Activated CD4-positive, alpha-beta T cell treated with anti-CD3 and anti-CD28 coated beads for 36 hours (primary cell): ENCODE measurements at regions of chr3 and their contacts with region 1.

Region 1: DNA sequence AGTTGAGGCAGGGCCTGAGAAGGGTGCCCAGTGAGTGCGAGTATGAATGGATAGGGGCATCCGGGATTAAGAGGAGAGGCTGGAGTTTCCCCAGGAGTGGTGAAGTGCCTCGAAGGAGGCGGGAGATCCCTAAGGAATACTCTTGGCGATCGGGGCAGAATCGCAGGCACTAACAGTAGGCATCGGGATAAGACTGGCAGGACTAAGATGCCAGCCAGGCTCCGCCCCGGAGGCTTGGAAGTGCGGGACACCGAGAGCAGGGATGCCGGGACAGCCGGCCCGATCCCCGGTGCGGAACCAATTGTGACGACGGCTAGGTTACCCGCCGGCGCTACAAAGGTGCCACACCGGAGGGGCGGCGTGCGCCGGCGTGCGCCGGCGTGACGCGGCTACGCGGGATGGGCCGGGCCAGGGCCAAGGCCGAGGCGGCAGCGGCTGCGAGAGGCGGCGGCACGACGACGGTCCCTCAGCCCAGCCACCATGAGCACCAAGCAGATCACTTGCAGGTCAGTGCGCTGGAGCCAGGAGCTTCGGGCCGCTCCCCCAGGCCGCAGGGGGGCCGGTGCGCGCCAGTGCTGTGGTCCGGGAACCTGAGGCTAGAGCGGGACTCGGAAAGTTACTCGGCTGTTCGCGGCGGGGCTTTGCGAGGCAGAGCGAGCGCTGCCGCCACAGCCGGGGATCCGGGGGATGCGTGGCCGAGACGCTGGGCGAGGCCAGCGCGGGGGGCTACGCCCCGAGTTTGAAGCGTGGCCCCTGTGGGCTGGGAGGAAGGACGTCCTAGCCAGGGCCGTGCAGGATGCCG is at the start of gene MKRN2:
- DNase-seq: peak; percentile 91
- ATAC-seq: peak; percentile 86
- H3K4me3 Mint-ChIP-seq: peak within 1 kb of the TSS; percentile 87
- H3K27ac Mint-ChIP-seq: peak within 1 kb of the TSS; percentile 92
- H3K4me1 Mint-ChIP-seq: peaks cover 51% of the 10 kb centered on the region
- H3K27me3 Mint-ChIP-seq: peaks cover 22% of the 10 kb centered on the region
- total RNA-seq, gene MKRN2: 21.5 to 24.9 TPM

Region 2: GRCh38 chr3:11601446-11602238 is 955.2 kb before region 1 on chr3:
- CTCF ChIA-PET with region 1: no interaction called
- POLR2A ChIA-PET with region 1: no interaction called
- intact Hi-C with region 1: no loop called
- DNase-seq: peak; percentile 70
- ATAC-seq: peak; percentile 90
- H3K4me3 Mint-ChIP-seq: no peak overlapping the region
- H3K27ac Mint-ChIP-seq: peak overlapping the region; percentile 73
- H3K4me1 Mint-ChIP-seq: peaks cover 36% of the 10 kb centered on the region
- H3K27me3 Mint-ChIP-seq: no peaks in the 10 kb centered on the region

Region 3: DNA sequence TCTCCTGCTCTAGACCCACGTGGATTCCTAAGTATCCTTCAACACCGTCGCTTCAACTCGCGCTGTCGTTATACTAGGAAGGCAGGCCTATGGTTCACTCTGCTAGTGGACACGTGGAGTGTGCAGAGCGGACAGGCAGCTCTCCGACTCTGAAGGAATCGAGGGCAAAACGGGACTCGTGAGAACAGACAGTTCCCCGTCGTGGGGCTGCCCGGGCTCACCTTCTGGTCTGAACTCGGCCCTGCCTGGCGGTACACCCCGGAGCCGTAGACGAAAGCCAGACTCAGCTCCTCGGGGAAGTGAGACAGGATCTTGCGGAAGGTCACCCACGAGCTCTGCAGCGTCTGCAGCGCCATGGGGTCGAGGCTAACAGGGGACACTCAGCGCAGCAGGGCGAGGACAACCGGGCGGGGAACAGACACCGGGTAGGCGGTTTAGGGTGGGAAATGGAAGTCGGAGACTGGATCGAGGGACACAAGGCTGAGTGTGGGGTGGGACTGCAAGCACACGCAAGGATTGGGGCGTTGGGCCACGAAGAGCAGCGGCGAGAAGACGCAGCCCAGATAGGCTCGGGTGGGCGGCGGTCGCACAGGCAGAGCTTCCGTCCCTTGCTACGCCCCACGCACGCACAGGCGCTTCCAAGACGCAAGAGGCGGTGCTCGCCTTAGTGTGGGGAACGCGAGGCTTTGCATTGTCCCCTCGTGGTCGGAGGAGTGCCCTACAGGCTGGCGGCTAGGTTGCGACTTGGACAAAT is 710.4 kb before region 1 on chr3 and contains the start of gene TAMM41:
- CTCF ChIA-PET with region 1: no interaction called
- POLR2A ChIA-PET with region 1: no interaction called
- intact Hi-C with region 1: loop called in 1 of 2 experiments (anchors 5 kb)
- DNase-seq: peak; percentile 95
- ATAC-seq: peak; percentile 100
- H3K4me3 Mint-ChIP-seq: peak within 1 kb of the TSS; percentile 97
- H3K27ac Mint-ChIP-seq: peak within 1 kb of the TSS; percentile 91
- H3K4me1 Mint-ChIP-seq: peaks cover 31% of the 10 kb centered on the region
- H3K27me3 Mint-ChIP-seq: no peaks in the 10 kb centered on the region
- total RNA-seq, gene TAMM41: 26.3 to 30.2 TPM

Region 4: DNA sequence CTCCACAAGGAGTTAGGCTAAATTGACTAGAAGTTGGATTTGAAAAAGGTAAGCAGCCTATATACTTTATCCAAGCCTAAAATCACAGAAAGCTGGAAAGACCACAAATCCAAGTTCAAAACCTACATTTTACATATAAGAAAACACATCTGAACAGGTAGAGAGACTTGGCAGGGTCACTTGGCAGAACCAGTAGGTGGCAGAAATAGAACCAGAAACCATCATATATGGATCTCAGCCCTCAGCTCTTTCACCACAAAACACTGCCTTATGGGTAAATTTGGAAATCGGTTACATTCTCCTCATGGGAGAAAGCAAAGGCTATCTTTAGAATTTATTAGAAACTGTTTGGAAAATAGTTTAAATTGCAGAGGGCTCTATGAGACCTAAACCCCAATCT is 44.2 kb after region 1 on chr3:
- CTCF ChIA-PET with region 1: no interaction called
- POLR2A ChIA-PET with region 1: no interaction called
- intact Hi-C with region 1: loop called (anchors 2 to 5 kb)
- DNase-seq: no peak
- ATAC-seq: no peak
- H3K4me3 Mint-ChIP-seq: no peak overlapping the region
- H3K27ac Mint-ChIP-seq: no peak overlapping the region
- H3K4me1 Mint-ChIP-seq: peaks cover 3% of the 10 kb centered on the region
- H3K27me3 Mint-ChIP-seq: no peaks in the 10 kb centered on the region

Region 5: DNA sequence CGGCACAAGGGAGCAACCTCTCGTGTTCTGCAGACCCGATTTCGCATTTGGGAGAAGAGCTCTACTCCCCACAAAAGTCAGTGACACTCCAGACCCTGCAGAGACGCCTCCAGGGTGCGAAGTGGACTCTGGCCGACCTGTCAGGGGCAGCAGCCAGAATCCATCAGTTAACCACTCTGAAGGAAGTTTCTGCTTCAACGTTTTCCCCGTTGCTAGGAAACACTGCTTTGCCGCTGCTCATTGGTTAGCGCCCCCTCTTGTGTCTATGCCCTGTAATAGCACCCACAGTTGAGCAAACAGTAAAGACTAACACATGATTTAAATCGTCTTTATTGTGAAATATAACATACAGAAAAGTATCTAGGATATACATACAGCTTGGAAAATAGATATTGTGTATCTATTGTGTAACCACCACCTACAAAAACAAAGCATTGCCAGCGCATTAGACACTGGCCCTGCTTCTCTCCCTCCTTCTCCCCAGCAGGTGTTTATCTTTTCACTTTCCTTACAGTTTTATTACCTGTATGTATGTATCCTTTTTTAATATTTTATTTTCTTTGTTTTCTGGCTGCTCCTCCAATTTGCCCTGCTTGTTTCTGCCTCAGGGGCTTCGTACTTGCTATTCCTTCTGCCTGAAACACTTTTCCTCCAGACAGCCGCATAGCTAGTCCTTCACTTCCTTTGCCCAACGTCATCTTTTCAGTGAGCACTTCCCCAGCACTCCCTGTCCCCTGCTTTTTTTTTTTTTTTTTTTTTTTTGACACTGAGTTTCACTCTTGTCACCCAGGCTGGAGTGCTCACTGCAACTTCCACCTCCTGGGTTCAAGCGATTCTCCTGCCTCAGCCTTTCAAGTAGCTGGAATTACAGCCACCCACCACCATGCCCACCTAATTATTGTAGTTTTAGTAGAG is 163.4 kb after region 1 on chr3:
- CTCF ChIA-PET with region 1: interaction called, 6 read pairs
- POLR2A ChIA-PET with region 1: no interaction called
- intact Hi-C with region 1: loop called in 1 of 2 experiments (anchors 2 kb)
- DNase-seq: peak; percentile 80
- ATAC-seq: peak; percentile 74
- H3K4me3 Mint-ChIP-seq: peak overlapping the region; percentile 36
- H3K27ac Mint-ChIP-seq: no peak overlapping the region
- H3K4me1 Mint-ChIP-seq: peaks cover 9% of the 10 kb centered on the region
- H3K27me3 Mint-ChIP-seq: no peaks in the 10 kb centered on the region

Region 6: GRCh38 chr3:12822725-12823373 is 266.0 kb after region 1 on chr3:
- CTCF ChIA-PET with region 1: no interaction called
- POLR2A ChIA-PET with region 1: no interaction called
- intact Hi-C with region 1: no loop called
- DNase-seq: no peak
- ATAC-seq: no peak
- H3K4me3 Mint-ChIP-seq: no peak overlapping the region
- H3K27ac Mint-ChIP-seq: peak overlapping the region; percentile 13
- H3K4me1 Mint-ChIP-seq: no peaks in the 10 kb centered on the region
- H3K27me3 Mint-ChIP-seq: no peaks in the 10 kb centered on the region

Region 7: GRCh38 chr3:12891985-12892839 is 335.3 kb after region 1 on chr3:
- CTCF ChIA-PET with region 1: no interaction called
- POLR2A ChIA-PET with region 1: no interaction called
- intact Hi-C with region 1: loop called in 1 of 2 experiments (anchors 2 kb)
- DNase-seq: peak; percentile 64
- ATAC-seq: peak; percentile 58
- H3K4me3 Mint-ChIP-seq: no peak overlapping the region
- H3K27ac Mint-ChIP-seq: no peak overlapping the region
- H3K4me1 Mint-ChIP-seq: peaks cover 9% of the 10 kb centered on the region
- H3K27me3 Mint-ChIP-seq: peaks cover 12% of the 10 kb centered on the region

Region 8: DNA sequence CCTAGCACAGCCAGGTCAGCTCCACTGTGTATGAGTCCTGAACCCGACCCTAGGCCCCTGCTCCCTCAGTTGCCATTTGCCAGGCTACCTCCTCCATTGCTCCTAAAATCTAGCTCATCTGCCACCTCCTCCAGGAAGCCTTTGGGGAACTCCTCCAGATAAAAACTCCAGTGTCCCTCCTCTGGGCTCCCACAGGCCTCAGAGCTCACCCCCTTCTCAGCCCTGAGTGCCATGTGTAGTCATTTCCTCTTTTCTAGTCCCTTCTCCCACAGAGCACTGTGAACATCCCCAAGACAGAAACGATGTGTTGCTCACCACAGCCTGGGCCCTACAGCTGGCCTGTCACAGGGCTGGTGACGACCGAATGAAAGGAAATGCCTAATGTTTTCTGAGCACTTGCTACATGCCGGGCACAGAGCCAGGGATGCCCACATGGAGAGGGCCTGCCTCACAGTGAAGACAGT is 455.4 kb after region 1 on chr3:
- CTCF ChIA-PET with region 1: no interaction called
- POLR2A ChIA-PET with region 1: no interaction called
- intact Hi-C with region 1: loop called in 1 of 2 experiments (anchors 5 kb)
- DNase-seq: peak; percentile 86
- ATAC-seq: peak; percentile 57
- H3K4me3 Mint-ChIP-seq: peak overlapping the region; percentile 72
- H3K27ac Mint-ChIP-seq: peak overlapping the region; percentile 98
- H3K4me1 Mint-ChIP-seq: peaks cover 85% of the 10 kb centered on the region
- H3K27me3 Mint-ChIP-seq: no peaks in the 10 kb centered on the region